Calu3 (cell line): ENCODE measurements at regions of chr9 and their contacts with region 1.

Region 1: GRCh38 chr9:109517901-109518377 is 19.8 kb upstream of the PTPN3 start:
- DNase-seq: no peak
- H3K4me3 Mint-ChIP-seq: no peak overlapping the region
- H3K27ac Mint-ChIP-seq: no peak overlapping the region
- H3K4me1 Mint-ChIP-seq: peaks cover 21% of the 10 kb centered on the region
- H3K27me3 Mint-ChIP-seq: no peaks in the 10 kb centered on the region
- CTCF ChIP-seq: no peak

Region 2: DNA sequence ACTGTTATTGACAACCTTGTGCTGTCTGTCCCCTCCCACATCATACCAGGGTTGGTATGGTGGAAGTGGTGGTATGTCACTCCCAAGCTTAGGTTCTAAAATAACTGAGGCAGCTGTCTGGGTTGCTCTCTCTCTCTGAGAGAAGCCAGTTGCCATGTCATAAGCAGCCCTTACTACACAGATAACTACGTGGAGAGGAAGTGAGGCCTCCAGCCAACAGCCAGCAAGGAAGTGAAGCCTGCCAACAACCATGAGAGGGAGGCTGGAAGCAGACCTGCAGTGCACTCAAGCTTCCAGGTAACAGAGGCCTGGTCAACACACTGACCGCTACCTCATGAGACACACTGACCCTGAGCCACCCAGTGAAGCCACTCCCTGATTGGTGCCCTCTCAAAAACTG is 523.2 kb before region 1 on chr9:
- CTCF ChIA-PET with region 1: no interaction called
- intact Hi-C with region 1: no loop called
- DNase-seq: peak; percentile 9
- H3K4me3 Mint-ChIP-seq: no peak overlapping the region
- H3K27ac Mint-ChIP-seq: no peak overlapping the region
- H3K4me1 Mint-ChIP-seq: peaks cover 31% of the 10 kb centered on the region
- H3K27me3 Mint-ChIP-seq: no peaks in the 10 kb centered on the region
- CTCF ChIP-seq: no peak

Region 3: DNA sequence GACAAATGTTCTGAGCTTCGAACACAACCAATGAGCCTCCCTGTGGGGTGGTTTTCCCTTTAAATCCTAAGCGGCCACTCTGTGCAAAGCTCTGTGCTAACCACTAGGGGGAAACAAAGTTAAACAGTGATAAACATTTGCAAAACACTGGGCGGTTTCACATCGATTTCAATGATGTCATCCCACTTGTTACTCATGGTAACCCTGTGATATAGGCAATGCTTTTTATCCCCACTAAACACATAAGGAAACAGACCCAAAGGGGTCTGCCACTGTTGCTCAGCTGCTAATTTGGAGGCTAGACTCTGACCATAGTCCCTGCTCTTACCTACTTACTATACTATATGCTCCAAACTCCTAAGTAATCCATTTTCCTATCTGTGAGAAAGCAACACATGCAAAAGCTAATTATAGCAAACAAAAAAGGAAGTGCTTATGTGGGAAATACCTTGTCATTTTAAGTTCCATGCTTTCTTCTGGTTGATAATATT is 77.1 kb before region 1 on chr9:
- CTCF ChIA-PET with region 1: interaction called, 5 read pairs
- intact Hi-C with region 1: loop called (anchors 1 kb)
- DNase-seq: peak; percentile 58
- H3K4me3 Mint-ChIP-seq: no peak overlapping the region
- H3K27ac Mint-ChIP-seq: peak overlapping the region; percentile 85
- H3K4me1 Mint-ChIP-seq: peaks cover 11% of the 10 kb centered on the region
- H3K27me3 Mint-ChIP-seq: no peaks in the 10 kb centered on the region
- CTCF ChIP-seq: peak; percentile 54

Region 4: DNA sequence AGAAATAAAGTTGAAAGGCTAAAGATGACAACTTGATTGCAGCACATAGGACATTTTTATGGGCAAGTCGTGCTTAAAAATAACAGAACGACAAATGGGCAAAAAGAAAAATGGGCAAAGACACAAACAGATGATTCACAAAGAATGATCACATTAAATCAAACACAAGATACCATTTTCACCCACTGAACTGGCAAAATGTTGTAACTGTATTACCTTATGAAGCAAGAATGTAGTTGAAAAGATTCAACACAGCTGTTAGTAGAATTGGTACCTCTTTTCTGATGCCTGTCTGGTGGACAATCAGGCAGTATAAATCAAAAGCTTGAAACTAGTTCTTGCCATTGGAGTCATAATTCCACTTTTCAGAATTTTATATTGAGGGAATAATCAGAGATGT is 181.1 kb after region 1 on chr9:
- CTCF ChIA-PET with region 1: no interaction called
- intact Hi-C with region 1: no loop called
- DNase-seq: no peak
- H3K4me3 Mint-ChIP-seq: no peak overlapping the region
- H3K27ac Mint-ChIP-seq: no peak overlapping the region
- H3K4me1 Mint-ChIP-seq: no peaks in the 10 kb centered on the region
- H3K27me3 Mint-ChIP-seq: peaks cover 2% of the 10 kb centered on the region
- CTCF ChIP-seq: no peak